ENCODE measurements at regions of chr5 and their contacts with region 1.

Region 1: GRCh38 chr5:76473661-76474060 is 70.6 kb downstream of the IQGAP2 start:
- DNase-seq: peak; percentile 87
- H3K4me3 Mint-ChIP-seq: peak overlapping the region; percentile 22
- H3K27ac Mint-ChIP-seq: peak overlapping the region; percentile 82
- H3K4me1 Mint-ChIP-seq: peaks cover 85% of the 10 kb centered on the region
- H3K27me3 Mint-ChIP-seq: no peaks in the 10 kb centered on the region

Region 2: DNA sequence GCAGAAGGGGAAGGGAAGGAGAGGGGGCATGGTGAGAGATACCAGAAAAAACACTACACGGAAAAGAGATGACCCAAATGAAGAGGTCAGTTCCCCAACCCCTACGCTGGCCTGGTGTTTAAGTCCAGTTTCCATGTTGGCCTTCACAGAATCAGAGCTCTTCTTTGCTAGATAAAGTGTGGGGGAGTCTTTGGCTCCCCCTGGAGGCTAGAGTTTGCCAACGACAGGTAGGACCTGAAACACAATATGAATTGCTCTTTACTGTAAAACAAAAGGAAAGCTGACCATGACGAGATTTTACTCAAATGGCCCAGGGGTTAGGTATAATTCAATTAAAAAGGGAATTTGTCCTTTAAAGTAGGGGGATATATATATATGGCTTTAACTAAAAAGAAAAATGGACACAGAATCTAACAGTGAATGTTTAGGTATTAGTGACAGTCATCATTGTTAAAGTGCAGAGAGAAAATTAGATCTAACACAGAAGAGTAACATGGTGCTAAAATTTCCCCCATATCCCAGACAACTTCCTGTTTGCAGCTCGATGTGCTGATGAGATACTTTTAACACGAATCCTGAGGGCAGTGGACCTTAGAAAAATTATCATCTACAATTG is 298.5 kb before region 1 on chr5:
- CTCF ChIA-PET with region 1: no interaction called
- POLR2A ChIA-PET with region 1: no interaction called
- intact Hi-C with region 1: loop called (anchors 5 kb)
- DNase-seq: peak; percentile 70
- H3K4me3 Mint-ChIP-seq: no peak overlapping the region
- H3K27ac Mint-ChIP-seq: no peak overlapping the region
- H3K4me1 Mint-ChIP-seq: peaks cover 34% of the 10 kb centered on the region
- H3K27me3 Mint-ChIP-seq: no peaks in the 10 kb centered on the region

Region 3: DNA sequence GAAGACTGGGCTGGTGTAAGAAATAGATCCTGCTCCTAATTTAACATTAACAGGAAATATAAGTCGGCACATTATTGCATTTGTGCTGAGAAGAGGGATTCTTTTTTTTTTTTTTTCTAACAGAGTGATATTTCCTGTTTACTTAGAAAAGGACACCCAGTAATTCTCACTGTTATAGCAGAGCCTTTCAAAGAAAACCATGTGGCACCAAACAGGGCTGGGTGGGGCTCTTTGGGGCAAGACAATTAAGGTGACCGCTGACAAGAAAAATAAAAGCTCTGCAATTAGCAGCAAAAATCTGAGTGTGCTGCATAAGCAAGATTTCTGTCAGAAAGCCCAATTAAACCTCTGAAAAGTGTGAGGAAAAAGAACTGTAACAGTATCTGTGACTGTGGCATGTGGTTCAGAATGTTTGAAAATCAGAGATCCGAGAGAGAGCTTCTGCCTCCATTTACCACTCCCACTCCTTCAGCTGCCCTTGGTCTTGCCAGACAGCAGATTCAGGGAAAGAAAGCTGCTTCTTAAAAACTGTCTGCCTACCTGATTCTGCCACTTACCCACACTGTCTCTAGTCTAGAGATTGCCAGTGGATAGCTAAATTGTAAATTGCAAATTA is 147.7 kb before region 1 on chr5:
- CTCF ChIA-PET with region 1: no interaction called
- POLR2A ChIA-PET with region 1: no interaction called
- intact Hi-C with region 1: loop called (anchors 5 kb)
- DNase-seq: peak; percentile 50
- H3K4me3 Mint-ChIP-seq: peak overlapping the region; percentile 43
- H3K27ac Mint-ChIP-seq: peak overlapping the region; percentile 86
- H3K4me1 Mint-ChIP-seq: peaks cover 56% of the 10 kb centered on the region
- H3K27me3 Mint-ChIP-seq: no peaks in the 10 kb centered on the region

Region 4: GRCh38 chr5:76393035-76393680 is 80.5 kb before region 1 on chr5:
- CTCF ChIA-PET with region 1: no interaction called
- POLR2A ChIA-PET with region 1: no interaction called
- intact Hi-C with region 1: no loop called
- DNase-seq: peak; percentile 35
- H3K4me3 Mint-ChIP-seq: no peak overlapping the region
- H3K27ac Mint-ChIP-seq: peak overlapping the region; percentile 67
- H3K4me1 Mint-ChIP-seq: peaks cover 46% of the 10 kb centered on the region
- H3K27me3 Mint-ChIP-seq: no peaks in the 10 kb centered on the region

Region 5: GRCh38 chr5:76433261-76433660 is 40.4 kb before region 1 on chr5:
- CTCF ChIA-PET with region 1: no interaction called
- POLR2A ChIA-PET with region 1: no interaction called
- intact Hi-C with region 1: loop called (anchors 5 kb)
- DNase-seq: no peak
- H3K4me3 Mint-ChIP-seq: no peak overlapping the region
- H3K27ac Mint-ChIP-seq: no peak overlapping the region
- H3K4me1 Mint-ChIP-seq: peaks cover 25% of the 10 kb centered on the region
- H3K27me3 Mint-ChIP-seq: no peaks in the 10 kb centered on the region

Region 6: DNA sequence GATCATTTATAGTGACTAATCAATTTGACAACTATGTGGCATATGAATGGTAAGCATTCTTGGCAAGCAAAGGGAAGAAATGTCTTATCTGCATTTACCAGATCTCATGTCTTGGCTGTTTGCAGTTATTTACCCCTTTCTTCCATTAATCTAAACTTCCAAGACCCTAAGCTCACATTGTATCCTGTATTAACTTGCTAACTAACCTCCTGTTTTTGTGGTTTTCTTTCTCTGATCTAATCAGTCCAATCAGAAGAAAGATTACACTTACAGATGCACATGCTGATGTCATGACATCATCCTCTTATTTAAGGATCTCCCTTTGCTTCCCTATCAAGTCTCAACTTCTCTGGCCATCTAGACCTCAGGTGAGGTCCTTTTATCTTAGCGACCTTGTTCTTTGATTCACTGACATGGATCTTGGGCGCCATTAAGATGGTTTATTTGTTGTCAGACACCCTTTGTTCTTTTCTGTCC is 54.1 kb after region 1 on chr5:
- CTCF ChIA-PET with region 1: interaction called, 5 read pairs
- POLR2A ChIA-PET with region 1: interaction called, 6 read pairs
- intact Hi-C with region 1: loop called (anchors 2 kb)
- DNase-seq: no peak
- H3K4me3 Mint-ChIP-seq: no peak overlapping the region
- H3K27ac Mint-ChIP-seq: peak overlapping the region; percentile 8
- H3K4me1 Mint-ChIP-seq: peaks cover 82% of the 10 kb centered on the region
- H3K27me3 Mint-ChIP-seq: no peaks in the 10 kb centered on the region

Region 7: GRCh38 chr5:76582230-76583162 is 108.8 kb after region 1 on chr5:
- CTCF ChIA-PET with region 1: interaction called, 4 read pairs
- POLR2A ChIA-PET with region 1: no interaction called
- intact Hi-C with region 1: loop called (anchors 1 kb)
- DNase-seq: peak; percentile 59
- H3K4me3 Mint-ChIP-seq: no peak overlapping the region
- H3K27ac Mint-ChIP-seq: peak overlapping the region; percentile 66
- H3K4me1 Mint-ChIP-seq: peaks cover 27% of the 10 kb centered on the region
- H3K27me3 Mint-ChIP-seq: no peaks in the 10 kb centered on the region